Tibial artery (tissue), 4 donors: ENCODE measurements at regions of chr18 and their contacts with region 1.

Region 1: DNA sequence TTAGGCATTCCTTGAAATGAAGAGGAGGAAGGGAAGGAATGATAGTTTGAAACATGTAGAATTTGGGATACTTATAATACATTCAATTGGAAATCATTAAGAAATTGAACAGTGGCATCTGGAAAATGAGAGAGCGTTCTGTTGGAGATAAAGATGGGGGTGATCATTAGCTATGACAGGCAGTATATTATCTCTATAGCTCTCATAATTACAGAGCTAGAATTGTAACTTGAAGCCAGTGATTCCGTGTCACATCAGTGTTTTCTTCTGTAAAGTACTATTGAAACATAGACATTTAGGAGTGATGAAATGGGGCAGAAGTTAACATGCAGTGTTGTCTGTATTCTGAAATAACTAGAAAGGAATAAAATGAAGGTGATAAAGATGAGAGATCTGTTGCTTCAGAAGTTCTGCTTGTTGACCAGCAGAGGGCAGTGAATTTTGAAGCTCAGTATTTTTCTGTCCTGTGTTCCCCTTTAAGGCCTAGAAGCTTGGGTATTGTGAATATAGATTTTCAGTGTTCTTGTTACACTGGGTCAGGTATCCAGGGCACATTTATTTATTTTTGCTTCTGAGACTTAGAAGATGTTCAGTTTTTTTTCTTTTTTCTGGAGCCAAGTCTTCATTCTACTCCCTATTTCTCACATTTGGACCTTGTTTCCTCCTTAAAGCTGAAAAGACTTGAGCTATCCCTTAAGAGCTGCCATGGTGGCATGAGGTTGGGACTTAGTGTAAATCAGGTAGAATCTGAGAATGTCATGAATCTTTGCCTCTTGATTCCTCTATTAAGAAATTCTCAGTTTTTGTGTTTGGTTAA is 157.4 kb downstream of the TAF4B start:
- DNase-seq: no peak
- H3K4me3 ChIP-seq: no peak overlapping the region
- H3K27ac ChIP-seq: no peak overlapping the region
- H3K4me1 ChIP-seq: peaks cover 0 to 12% (median 8%) of the 10 kb centered on the region in 4 donors
- H3K27me3 ChIP-seq: no peaks in the 10 kb centered on the region
- CTCF ChIP-seq: peak; percentile 64 to 78

Region 2: DNA sequence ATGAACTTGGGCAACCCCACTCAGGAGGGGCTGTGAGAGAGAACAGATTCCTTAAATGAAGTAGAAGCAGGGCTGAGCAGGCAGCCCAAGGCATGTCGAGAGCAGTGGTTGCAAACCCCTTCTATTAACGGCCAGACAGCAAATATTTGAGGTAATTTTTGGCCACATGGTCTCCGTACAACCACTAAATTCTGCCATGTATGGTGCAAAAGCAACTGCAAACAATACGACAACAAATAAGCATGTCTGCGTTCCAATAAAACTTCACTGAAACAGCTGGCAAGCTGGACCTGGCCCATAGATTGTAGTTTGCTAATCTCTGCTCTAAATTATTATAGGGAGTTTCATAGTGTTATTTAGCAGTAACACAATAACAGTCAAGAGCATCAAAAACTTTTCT is 814.7 kb before region 1 on chr18:
- intact Hi-C with region 1: no loop called
- DNase-seq: no peak
- H3K4me3 ChIP-seq: no peak overlapping the region
- H3K27ac ChIP-seq: no peak overlapping the region
- H3K4me1 ChIP-seq: no peaks in the 10 kb centered on the region
- H3K27me3 ChIP-seq: no peaks in the 10 kb centered on the region
- CTCF ChIP-seq: no peak

Region 3: DNA sequence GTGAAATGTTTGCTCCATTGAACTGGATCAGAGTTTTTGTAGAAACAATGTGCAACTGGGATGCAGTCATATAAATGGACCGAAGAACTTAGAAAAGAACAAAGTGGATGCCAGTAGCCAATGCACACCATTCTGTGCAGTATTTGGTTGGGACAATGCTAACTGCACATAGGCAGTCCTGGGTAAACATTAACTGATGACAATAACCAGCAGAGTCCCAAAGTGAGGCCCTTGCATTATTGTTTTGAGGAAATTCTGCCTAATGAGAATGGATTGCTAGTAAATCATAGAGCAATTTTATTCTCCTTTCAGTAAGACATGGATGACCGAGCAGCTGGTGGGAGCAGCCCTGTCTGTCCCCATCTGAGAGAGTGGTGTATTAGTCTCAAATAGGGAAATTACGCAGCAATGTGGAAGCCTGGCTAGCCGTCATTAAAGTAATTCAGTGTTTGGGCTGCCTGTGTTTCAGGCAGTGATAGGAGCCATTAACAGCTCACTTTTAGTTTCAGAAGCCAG is 69.8 kb after region 1 on chr18:
- intact Hi-C with region 1: no loop called
- DNase-seq: no peak
- H3K4me3 ChIP-seq: no peak overlapping the region
- H3K27ac ChIP-seq: no peak overlapping the region
- H3K4me1 ChIP-seq: no peaks in the 10 kb centered on the region
- H3K27me3 ChIP-seq: no peaks in the 10 kb centered on the region
- CTCF ChIP-seq: no peak

Region 4: DNA sequence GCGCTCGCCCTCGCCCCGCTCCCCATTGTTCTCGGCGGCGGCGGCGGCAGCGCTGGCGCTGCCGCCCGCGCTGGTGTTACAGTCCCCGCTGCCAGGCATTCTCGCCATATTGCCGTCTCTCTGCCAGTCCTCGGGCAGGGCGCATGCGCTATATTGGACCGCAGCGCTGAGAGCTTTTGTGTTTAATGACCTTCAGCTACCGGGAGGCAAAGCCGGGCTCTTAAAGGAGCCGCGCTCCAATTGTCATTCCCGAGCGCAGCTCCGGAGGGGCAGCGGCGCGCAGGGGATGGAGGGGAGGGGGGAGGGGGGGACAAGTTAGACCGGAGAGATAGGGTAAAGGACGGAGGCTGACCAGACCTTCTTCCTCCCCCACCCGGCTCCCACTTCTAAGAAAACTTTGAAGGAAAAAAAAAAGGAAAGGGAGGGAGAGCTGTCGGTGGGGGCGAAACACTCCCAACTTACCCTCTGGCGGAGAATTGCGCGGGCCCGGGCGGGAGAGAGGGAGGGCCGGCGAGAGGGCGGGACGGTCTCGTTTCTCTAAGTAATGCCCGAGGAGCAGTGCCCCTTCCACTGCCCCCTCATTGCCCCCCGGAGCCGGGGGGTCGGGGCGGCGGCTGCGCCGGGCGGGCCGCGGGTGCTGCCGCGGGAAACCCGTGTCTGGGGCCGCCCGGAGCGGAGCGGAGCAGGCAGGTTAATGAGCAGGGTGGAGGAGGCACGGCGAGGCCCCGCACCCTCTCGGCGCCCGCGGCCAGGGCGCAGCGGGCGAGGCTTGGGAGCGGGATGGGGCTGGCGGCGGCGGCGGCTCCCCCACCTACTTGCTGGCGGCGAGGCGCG is 165.0 kb after region 1 on chr18 and contains the start of gene KCTD1:
- intact Hi-C with region 1: loop called (anchors 10 kb)
- DNase-seq: peak; percentile 72 to 83
- H3K4me3 ChIP-seq: peak within 1 kb of the TSS; percentile 77 to 91
- H3K27ac ChIP-seq: peak within 1 kb of the TSS; percentile 85 to 93
- H3K4me1 ChIP-seq: peaks cover 0 to 51% (median 30%) of the 10 kb centered on the region in 4 donors
- H3K27me3 ChIP-seq: no peaks in the 10 kb centered on the region
- CTCF ChIP-seq: no peak

Region 5: DNA sequence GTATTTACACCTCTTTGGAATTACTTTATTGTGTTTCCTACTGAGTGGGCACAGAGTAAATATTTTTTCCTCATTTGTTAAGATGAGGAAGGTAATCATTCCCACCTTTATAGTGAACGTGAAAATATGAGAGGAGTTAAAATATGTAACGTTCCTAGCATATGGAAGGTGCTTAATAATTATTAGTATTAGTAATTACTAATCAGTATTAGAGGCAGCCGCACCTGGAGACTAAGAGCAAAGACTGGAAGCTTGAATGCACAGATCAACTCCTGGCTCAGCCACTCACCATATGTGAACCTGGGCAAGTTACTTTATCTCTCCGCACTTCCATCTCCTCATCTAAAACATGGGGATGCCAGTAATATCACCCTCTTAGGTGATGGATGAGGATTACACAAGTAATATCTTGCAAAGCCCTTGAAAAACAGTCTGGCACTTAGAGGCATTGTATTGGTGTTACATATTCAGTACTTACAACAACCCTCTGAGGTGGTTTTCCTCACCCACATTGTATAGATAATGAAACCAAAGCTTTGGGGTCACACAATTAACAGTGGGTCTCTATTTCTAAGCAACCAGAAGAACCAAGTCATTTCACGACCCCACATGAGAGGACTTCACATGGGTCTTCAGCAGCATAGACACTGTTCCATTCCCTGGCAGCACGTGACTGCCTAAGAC is 265.0 kb after region 1 on chr18:
- intact Hi-C with region 1: loop called (anchors 2 kb)
- DNase-seq: no peak
- H3K4me3 ChIP-seq: no peak overlapping the region
- H3K27ac ChIP-seq: no peak overlapping the region
- H3K4me1 ChIP-seq: peaks cover 0 to 5% (median 2%) of the 10 kb centered on the region in 4 donors
- H3K27me3 ChIP-seq: no peaks in the 10 kb centered on the region
- CTCF ChIP-seq: no peak